Right ventricle myocardium inferior (tissue), 1 donor: ENCODE measurements at regions of chr9 and their contacts with region 1.

Region 1: GRCh38 chr9:19493174-19493811 is 84.5 kb downstream of the ACER2 start:
- DNase-seq: peak; percentile 90
- ATAC-seq: peak; percentile 91

Region 2: GRCh38 chr9:18857769-18858168 is 635.5 kb before region 1 on chr9:
- intact Hi-C with region 1: no loop called
- DNase-seq: no peak
- ATAC-seq: no peak

Region 3: DNA sequence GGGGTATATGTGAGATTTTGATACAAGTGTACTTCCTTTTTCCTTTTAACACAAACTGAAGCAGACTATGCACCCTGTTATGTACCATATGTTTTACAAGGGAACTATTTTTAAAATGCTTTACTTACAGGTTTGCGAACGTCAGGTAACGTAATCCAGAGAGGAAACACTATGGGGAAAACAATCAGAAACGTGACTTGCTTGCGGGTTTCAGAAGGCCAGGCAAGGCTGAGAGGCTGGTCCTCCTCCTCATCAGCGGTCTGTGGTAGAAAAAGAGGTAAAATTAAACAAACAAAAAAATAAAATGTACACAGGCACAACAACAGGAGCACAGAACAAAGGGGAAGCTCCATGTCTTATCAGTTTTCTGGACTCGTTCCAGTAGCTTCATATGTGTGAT is 56.7 kb after region 1 on chr9:
- intact Hi-C with region 1: no loop called
- DNase-seq: no peak
- ATAC-seq: no peak

Region 4: DNA sequence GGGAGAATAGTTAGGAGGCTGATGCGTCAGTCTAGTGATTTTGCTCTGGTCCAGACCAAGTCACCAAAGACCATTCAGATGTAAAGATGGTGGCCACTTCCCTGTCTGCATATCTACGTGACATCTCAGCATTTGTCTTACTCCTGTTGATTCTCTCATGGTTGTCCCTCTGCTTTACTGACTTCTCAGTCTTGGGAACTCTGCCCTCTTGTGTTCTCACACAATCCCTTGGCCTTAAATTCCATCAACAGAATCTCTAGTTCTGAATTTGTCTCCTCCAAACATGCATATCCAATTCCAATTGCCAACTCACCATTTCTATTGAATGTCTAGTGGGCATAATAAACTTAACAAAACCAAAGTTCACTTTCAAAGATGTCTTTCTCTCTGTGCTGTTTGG is 147.8 kb after region 1 on chr9:
- intact Hi-C with region 1: loop called (anchors 10 kb)
- DNase-seq: no peak
- ATAC-seq: no peak